BJ (cell line): ENCODE measurements at regions of chr6 and their contacts with region 1.

Region 1: GRCh38 chr6:30914076-30914853 is at the start of gene VARS2:
- DNase-seq: peak; percentile 64
- H3K4me3 ChIP-seq: peak within 1 kb of the TSS; percentile 37
- H3K27me3 ChIP-seq: no peaks in the 10 kb centered on the region
- CTCF ChIP-seq: peak; percentile 49
- polyA plus RNA-seq, gene VARS2: 14.8 and 16.1 TPM in 2 replicates

Region 2: DNA sequence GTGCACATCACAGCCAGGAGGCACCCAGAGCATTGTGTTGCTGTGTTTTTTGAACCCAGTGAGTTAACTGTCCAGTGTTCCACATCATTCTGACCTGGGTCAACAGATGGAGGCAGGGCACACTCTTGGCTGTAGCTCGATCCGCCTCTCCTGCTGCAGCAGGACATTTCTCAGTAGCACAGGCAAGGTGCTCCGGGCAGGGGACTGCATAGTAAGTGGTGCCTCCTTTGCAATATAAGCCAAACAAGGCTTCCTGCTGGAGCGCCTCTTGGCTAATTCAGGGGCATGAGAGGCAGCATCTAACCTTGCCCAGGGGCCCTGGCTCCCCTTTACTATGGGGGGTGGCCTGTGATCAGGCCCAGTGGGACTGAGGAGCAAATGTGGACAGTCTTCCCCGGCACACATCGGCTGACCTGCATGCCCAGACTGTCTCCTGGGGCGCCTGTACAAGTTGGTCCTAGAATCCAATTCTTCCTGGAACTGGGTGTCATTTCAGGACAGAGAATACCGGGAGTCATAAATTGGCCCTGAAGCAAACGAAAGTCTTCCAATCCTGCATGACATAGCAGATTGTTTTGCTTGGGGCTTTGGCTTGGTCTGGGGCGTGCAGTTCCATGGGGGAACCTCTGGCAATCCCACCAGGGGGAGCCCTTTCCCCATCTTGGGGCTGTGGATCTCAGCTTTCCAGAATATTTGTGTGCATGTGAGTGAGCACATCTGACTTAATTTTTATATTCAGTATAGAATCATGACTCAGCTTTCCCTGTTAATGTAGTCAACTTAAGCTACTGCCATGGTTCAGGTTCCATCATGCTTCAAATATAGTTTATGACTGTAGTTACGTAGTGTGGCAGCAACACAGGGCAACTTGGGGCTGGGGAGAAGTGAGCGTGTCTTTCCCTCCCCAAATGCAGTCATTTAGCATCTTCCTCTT is 86.0 kb before region 1 on chr6:
- CTCF ChIA-PET with region 1: interaction called, 77 read pairs
- POLR2A ChIA-PET with region 1: no interaction called
- DNase-seq: peak; percentile 69
- H3K4me3 ChIP-seq: no peak overlapping the region
- H3K27me3 ChIP-seq: no peaks in the 10 kb centered on the region
- CTCF ChIP-seq: peak; percentile 92

Region 3: DNA sequence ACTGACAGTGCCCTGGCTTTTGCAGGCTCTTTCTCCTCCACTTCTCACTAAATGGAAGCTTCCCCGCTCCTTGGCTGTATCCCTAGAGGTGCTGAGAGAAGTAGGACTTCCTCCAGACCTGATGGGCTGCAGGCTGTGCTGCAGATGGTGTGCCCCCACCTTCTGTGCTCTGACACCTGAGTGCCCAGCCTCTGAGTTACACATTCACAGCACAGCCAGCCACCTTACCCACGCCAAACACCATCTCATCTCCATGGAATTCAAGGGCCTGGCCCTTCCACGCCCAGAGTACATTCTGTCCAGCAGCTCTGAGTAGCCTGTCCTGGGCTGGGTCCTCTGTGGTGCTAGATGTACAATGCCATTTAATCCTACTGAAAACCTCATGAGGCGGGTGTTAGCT is 12.4 kb after region 1 on chr6:
- CTCF ChIA-PET with region 1: interaction called, 33 read pairs
- POLR2A ChIA-PET with region 1: no interaction called
- DNase-seq: no peak
- H3K4me3 ChIP-seq: no peak overlapping the region
- H3K27me3 ChIP-seq: no peaks in the 10 kb centered on the region
- CTCF ChIP-seq: no peak

Region 4: DNA sequence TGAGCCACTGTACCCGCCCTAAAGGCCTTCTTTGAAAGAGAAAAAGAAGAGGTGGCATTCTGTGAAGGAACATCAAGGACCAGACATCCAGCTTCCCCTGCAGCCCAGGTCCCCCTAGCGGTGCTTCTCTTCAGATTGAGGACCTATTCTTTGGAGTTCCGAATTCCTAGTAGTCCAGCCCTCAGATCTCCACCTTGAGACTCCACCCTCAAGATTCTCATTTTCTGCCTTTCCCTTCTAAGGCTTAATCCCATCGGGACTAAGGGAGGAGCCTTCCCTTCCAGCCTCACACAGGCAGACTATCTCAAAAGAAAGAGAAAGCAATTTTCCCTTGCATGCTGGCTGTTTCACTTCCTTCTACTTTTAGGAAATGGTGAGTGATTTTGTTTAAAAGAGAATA is 128.5 kb after region 1 on chr6:
- CTCF ChIA-PET with region 1: interaction called, 42 read pairs
- POLR2A ChIA-PET with region 1: no interaction called
- DNase-seq: no peak
- H3K4me3 ChIP-seq: no peak overlapping the region
- H3K27me3 ChIP-seq: peaks cover 3% of the 10 kb centered on the region
- CTCF ChIP-seq: peak; percentile 71

Region 5: GRCh38 chr6:31087494-31088089 is 173.3 kb after region 1 on chr6:
- CTCF ChIA-PET with region 1: interaction called, 78 read pairs
- POLR2A ChIA-PET with region 1: interaction called, 15 read pairs
- DNase-seq: no peak
- H3K4me3 ChIP-seq: no peak overlapping the region
- H3K27me3 ChIP-seq: no peaks in the 10 kb centered on the region; the same call in 1 of the 2 replicates
- CTCF ChIP-seq: peak; percentile 69